AG04450 (cell line): ENCODE measurements at regions of chr17 and their contacts with region 1.

Region 1: DNA sequence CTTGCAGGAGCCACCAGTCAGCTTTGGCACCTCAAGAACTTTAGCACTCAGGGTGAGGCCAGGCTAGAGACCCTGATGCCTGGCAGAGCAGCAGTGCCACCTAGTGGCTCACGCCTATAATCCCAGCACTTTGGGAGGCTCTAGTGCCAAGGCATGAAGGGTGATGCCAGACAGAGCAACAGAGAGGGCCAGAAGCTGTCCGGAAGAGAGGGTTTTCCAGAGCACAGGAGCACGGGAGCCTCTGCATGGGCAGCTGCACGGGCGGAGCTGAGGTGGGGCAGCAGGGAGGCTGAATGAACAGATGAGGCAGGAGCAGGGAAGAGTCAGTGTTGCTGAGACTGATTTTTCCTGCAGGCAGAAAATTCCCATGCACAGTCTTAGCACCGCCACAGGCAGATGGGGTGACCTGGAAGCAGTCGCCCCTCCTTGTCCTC is 38.9 kb downstream of the MYH3 start:
- DNase-seq: peak; percentile 18
- H3K4me3 ChIP-seq: no peak overlapping the region
- H3K27ac ChIP-seq: no peak overlapping the region
- H3K27me3 ChIP-seq: no peaks in the 10 kb centered on the region
- CTCF ChIP-seq: peak; percentile 93

Region 2: GRCh38 chr17:9918804-9919352 is 699.3 kb before region 1 on chr17:
- CTCF ChIA-PET with region 1: interaction called, 205 read pairs
- POLR2A ChIA-PET with region 1: no interaction called
- DNase-seq: no peak
- H3K4me3 ChIP-seq: no peak overlapping the region
- H3K27ac ChIP-seq: no peak overlapping the region
- H3K27me3 ChIP-seq: no peaks in the 10 kb centered on the region
- CTCF ChIP-seq: no peak

Region 3: GRCh38 chr17:9959377-9959981 is 658.7 kb before region 1 on chr17:
- CTCF ChIA-PET with region 1: interaction called, 12 read pairs
- POLR2A ChIA-PET with region 1: no interaction called
- DNase-seq: no peak
- H3K4me3 ChIP-seq: no peak overlapping the region
- H3K27ac ChIP-seq: no peak overlapping the region
- H3K27me3 ChIP-seq: no peaks in the 10 kb centered on the region
- CTCF ChIP-seq: peak; percentile 65

Region 4: GRCh38 chr17:10600571-10600970 is 17.6 kb before region 1 on chr17:
- CTCF ChIA-PET with region 1: interaction called, 34 read pairs
- POLR2A ChIA-PET with region 1: no interaction called
- DNase-seq: no peak
- H3K4me3 ChIP-seq: no peak overlapping the region
- H3K27ac ChIP-seq: no peak overlapping the region
- H3K27me3 ChIP-seq: no peaks in the 10 kb centered on the region
- CTCF ChIP-seq: no peak

Region 5: DNA sequence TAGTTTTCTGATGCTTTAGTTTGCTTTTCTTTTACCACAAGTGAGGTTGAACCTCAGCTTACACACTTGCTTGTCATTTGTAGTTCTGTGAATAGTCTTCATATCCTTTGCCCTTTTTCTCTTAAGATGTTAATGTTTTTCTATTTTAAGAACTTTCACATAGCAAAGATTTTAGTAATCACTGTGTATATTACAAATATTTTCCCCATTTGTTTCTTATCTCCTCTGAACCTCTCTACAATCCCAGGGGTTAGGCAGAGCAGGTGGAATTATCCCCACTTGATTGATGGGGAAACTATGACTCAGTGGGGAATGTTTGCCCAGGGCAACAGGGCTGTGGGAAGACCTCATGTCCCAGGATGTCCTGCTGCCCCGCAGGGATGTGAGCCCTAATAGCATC is 50.6 kb after region 1 on chr17:
- CTCF ChIA-PET with region 1: interaction called, 10 read pairs
- POLR2A ChIA-PET with region 1: no interaction called
- DNase-seq: peak; percentile 58
- H3K4me3 ChIP-seq: no peak overlapping the region
- H3K27ac ChIP-seq: peak overlapping the region; percentile 47
- H3K27me3 ChIP-seq: no peaks in the 10 kb centered on the region
- CTCF ChIP-seq: no peak